AG04449 (cell line): ENCODE measurements at regions of chr4 and their contacts with region 1.

Region 1: GRCh38 chr4:15681207-15682015 is at the start of gene FAM200B:
- DNase-seq: peak; percentile 84
- H3K4me3 ChIP-seq: peak within 1 kb of the TSS; percentile 87
- CTCF ChIP-seq: no peak

Region 2: DNA sequence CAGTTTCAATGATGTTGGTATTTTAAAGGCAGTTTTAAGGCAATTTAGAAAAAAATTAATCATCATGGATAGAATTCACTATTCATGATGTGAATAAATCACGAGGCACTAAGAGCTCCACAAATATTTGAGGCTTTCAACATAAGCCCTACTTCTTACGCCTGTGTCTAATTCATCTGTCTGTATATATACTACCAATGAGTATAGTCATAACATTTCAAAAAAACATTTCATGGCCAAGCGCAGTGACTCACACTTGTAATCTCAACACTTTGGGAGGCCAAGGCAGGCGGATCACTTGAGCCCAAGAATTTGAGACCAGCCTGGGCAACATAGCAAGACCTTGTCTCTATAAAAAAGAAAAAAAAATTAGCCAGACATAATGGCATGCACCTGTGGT is 82.8 kb before region 1 on chr4:
- CTCF ChIA-PET with region 1: no interaction called
- POLR2A ChIA-PET with region 1: no interaction called
- DNase-seq: peak; percentile 29
- H3K4me3 ChIP-seq: no peak overlapping the region
- CTCF ChIP-seq: no peak

Region 3: GRCh38 chr4:15695240-15695699 is 13.9 kb after region 1 on chr4:
- CTCF ChIA-PET with region 1: interaction called, 3 read pairs
- POLR2A ChIA-PET with region 1: interaction called, 11 read pairs
- DNase-seq: peak; percentile 96
- H3K4me3 ChIP-seq: no peak overlapping the region
- CTCF ChIP-seq: no peak